Mammary epithelial cell (primary cell): ENCODE measurements at regions of chr3 and their contacts with region 1.

Region 1: GRCh38 chr3:32177702-32178198 is 60.7 kb upstream of the CMTM8 start:
- DNase-seq: peak; percentile 79
- H3K4me3 ChIP-seq: no peak overlapping the region
- H3K27ac ChIP-seq: no peak overlapping the region
- H3K4me1 ChIP-seq: peaks cover 7% of the 10 kb centered on the region
- H3K27me3 ChIP-seq: no peaks in the 10 kb centered on the region
- CTCF ChIP-seq: peak; percentile 99 to 100

Region 2: GRCh38 chr3:32249184-32249782 is 71.5 kb after region 1 on chr3:
- CTCF ChIA-PET with region 1: no interaction called
- dilution Hi-C with region 1: no loop called
- in situ Hi-C with region 1: no loop called
- intact Hi-C with region 1: loop called (anchors 5 kb)
- DNase-seq: peak; percentile 95
- H3K4me3 ChIP-seq: no peak overlapping the region
- H3K27ac ChIP-seq: peak overlapping the region; percentile 39
- H3K4me1 ChIP-seq: peaks cover 19% of the 10 kb centered on the region
- H3K27me3 ChIP-seq: no peaks in the 10 kb centered on the region
- CTCF ChIP-seq: no peak

Region 3: GRCh38 chr3:32334675-32335074 is 156.9 kb after region 1 on chr3:
- CTCF ChIA-PET with region 1: no interaction called
- dilution Hi-C with region 1: no loop called
- in situ Hi-C with region 1: no loop called
- intact Hi-C with region 1: loop called (anchors 1 kb)
- DNase-seq: no peak
- H3K4me3 ChIP-seq: no peak overlapping the region
- H3K27ac ChIP-seq: no peak overlapping the region
- H3K4me1 ChIP-seq: no peaks in the 10 kb centered on the region
- H3K27me3 ChIP-seq: no peaks in the 10 kb centered on the region
- CTCF ChIP-seq: peak; percentile 26 to 64

Region 4: DNA sequence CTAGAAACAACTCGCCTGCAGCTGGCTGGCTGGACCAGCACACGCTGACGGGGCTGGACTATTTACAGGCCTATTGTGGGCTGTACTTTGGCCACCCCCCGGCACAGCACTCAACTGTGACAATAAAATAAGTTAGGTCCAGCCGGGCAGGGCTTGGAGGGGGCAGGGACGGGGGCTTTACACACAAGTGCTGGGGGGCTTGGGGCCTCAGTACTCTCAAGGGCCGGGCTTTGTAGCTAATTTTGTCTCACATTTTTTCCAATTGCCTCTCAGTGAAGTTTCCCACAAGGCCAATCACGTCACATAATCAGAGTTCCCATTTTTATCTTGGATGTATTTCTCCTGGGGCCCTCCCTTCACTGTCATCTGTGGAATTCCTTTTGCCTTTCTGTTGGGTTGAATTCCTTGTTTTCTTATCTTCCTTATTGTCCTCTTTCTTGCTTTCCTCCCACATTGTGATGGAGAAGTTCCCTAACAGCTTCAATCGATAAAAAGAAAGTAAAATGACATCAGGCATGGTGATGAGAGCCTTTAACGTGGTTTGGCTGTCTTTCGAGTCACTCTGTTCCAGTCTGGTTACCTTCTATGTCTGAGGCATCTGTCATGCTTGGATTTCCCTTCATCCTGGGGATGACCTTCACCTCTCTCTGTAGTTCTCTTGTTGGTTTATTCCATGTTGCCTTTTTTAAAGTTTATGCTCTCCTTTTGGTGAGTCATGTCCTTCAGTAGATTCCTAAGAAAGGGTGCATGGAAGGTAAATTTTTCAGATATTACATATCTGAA is 169.8 kb after region 1 on chr3:
- CTCF ChIA-PET with region 1: interaction called, 16 read pairs
- dilution Hi-C with region 1: no loop called
- in situ Hi-C with region 1: loop called in 1 of 2 experiments (anchors 5 kb)
- intact Hi-C with region 1: no loop called
- DNase-seq: no peak
- H3K4me3 ChIP-seq: no peak overlapping the region
- H3K27ac ChIP-seq: no peak overlapping the region
- H3K4me1 ChIP-seq: no peaks in the 10 kb centered on the region
- H3K27me3 ChIP-seq: no peaks in the 10 kb centered on the region
- CTCF ChIP-seq: no peak

Region 5: GRCh38 chr3:32467333-32468070 is 289.8 kb after region 1 on chr3:
- CTCF ChIA-PET with region 1: no interaction called
- dilution Hi-C with region 1: no loop called
- in situ Hi-C with region 1: loop called in 1 of 2 experiments (anchors 10 kb)
- intact Hi-C with region 1: loop called (anchors 1 kb)
- DNase-seq: peak; percentile 64
- H3K4me3 ChIP-seq: peak overlapping the region in 1 of 3 experiments; percentile 33
- H3K27ac ChIP-seq: peak overlapping the region; percentile 23
- H3K4me1 ChIP-seq: peaks cover 55% of the 10 kb centered on the region
- H3K27me3 ChIP-seq: no peaks in the 10 kb centered on the region
- CTCF ChIP-seq: peak; percentile 93 to 98

Region 6: DNA sequence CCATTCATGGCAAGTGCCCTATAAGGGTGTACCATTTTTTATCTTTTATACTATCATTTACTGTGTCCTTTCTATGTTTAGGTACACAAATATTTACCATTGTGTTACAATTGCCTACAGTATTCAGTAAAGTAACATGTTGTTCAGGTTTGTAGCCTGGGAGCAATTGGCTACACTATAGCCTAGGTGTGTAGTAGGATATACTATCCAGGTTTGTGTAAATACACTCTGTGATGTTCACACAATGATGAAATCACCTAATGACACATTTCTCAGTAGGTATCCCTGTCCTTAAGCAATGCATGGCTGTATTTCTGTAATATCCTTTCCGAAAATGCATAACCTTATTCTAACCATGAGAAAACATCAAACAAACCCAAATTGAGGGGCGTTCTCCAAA is 489.4 kb after region 1 on chr3:
- CTCF ChIA-PET with region 1: no interaction called
- dilution Hi-C with region 1: no loop called
- in situ Hi-C with region 1: loop called (anchors 10 to 25 kb)
- intact Hi-C with region 1: loop called (anchors 2 kb)
- DNase-seq: no peak
- H3K4me3 ChIP-seq: no peak overlapping the region
- H3K27ac ChIP-seq: no peak overlapping the region
- H3K4me1 ChIP-seq: no peaks in the 10 kb centered on the region
- H3K27me3 ChIP-seq: no peaks in the 10 kb centered on the region
- CTCF ChIP-seq: no peak